GM23248 (cell line): ENCODE measurements at regions of chr5 and their contacts with region 1.

Region 1: DNA sequence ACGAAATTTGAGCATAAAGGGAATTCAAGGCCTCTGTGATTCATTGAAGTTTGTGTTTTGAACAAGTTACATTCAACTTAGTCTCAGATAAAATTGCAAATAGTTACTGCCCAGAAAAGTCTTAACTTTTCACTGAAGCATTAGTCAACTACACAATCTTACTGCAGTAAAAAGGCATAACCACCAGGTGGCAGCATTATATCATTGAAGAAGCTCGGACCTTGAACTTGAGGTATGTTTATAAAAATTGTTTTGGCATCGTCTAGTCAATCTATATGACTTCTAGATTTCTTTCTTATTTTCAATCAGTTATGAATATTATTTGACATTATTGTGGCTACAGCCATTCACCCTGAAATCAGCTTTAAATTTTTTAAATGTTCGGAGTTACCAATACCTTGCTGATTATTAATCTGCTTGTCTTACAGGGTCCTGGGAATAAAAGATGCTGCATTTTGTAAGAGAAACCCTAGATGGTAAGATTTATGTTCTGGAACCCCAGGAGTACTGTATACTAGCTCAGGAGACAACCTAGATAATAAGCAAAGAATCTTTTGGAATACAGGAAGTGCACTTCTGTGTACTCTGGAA is 83.9 kb upstream of the GRAMD2B start:
- DNase-seq: peak; percentile 79
- H3K4me3 ChIP-seq: no peak overlapping the region
- H3K27ac ChIP-seq: no peak overlapping the region
- H3K4me1 ChIP-seq: no peaks in the 10 kb centered on the region
- H3K27me3 ChIP-seq: no peaks in the 10 kb centered on the region

Region 2: GRCh38 chr5:126536874-126537273 is 197.6 kb after region 1 on chr5:
- in situ Hi-C with region 1: loop called (anchors 5 kb)
- DNase-seq: no peak
- H3K4me3 ChIP-seq: no peak overlapping the region
- H3K27ac ChIP-seq: no peak overlapping the region
- H3K4me1 ChIP-seq: peaks cover 3% of the 10 kb centered on the region; the same call in 1 of the 2 replicates
- H3K27me3 ChIP-seq: no peaks in the 10 kb centered on the region

Region 3: GRCh38 chr5:126776497-126777256 is 437.4 kb after region 1 on chr5 and contains the start of gene LMNB1:
- in situ Hi-C with region 1: loop called (anchors 25 kb)
- DNase-seq: peak; percentile 97
- H3K4me3 ChIP-seq: peak within 1 kb of the TSS; percentile 86
- H3K27ac ChIP-seq: peak within 1 kb of the TSS; percentile 75
- H3K4me1 ChIP-seq: peaks cover 9% of the 10 kb centered on the region
- H3K27me3 ChIP-seq: no peaks in the 10 kb centered on the region
- total RNA-seq, gene LMNB1: 27.3 and 44.1 TPM in 2 replicates